ENCODE measurements at regions of chr4 and their contacts with region 1.

Region 1: DNA sequence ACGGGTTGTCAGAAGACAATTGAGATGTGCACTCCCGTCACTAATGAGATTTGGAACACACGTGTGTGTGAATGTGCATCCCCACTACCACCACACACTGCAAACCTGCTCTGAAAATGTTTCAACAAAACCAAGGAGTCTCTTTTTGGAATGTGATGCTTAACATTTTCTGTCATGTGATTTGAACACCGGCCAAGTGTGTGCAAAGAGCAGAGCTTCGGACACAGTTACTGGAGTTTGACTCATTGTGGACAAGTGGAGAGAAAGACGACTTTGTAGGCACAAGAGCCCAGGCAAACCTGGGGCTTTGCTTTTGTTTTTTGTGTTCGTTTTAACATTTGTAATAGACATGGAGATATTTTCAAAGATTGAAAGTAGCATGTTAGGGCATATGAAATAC is 49.2 kb downstream of the CCKAR start:
- DNase-seq: no peak
- H3K4me3 ChIP-seq: no peak overlapping the region
- CTCF ChIP-seq: no peak

Region 2: DNA sequence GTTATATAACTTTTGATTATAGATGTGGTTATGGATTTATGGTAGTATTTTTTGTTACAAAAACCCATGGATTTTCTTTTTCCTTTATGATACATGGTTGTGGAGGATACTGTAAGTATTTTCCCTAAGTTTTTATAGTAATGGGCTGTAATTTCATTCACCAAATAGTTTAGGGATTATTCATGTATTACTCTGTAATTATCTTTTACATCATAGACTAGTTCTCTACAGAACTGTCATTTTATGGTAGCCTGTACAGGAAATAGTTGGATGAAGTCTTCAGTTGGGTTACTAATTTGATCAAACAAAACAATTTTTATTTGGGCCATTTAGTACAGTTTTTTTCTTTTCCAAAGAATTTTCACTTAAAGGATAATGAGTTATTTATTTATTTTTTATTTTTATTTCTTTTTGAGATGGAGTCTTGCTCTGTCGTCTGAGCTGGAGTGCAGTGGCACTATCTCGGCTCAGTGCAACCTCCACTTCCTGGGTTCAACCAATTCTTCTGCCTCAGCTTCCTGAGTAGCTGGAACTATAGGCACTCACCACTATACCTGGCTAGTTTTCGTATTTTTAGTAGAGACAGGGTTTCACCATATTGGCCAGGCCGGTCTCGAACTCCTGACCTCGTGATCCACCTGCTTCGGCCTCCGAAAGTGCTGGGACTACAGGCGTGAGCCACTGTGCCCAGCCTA is 78.2 kb before region 1 on chr4:
- in situ Hi-C with region 1: no loop called
- DNase-seq: no peak
- H3K4me3 ChIP-seq: no peak overlapping the region
- CTCF ChIP-seq: no peak

Region 3: GRCh38 chr4:26509681-26510333 is 68.7 kb after region 1 on chr4:
- in situ Hi-C with region 1: no loop called
- DNase-seq: no peak
- H3K4me3 ChIP-seq: no peak overlapping the region
- CTCF ChIP-seq: no peak

Region 4: DNA sequence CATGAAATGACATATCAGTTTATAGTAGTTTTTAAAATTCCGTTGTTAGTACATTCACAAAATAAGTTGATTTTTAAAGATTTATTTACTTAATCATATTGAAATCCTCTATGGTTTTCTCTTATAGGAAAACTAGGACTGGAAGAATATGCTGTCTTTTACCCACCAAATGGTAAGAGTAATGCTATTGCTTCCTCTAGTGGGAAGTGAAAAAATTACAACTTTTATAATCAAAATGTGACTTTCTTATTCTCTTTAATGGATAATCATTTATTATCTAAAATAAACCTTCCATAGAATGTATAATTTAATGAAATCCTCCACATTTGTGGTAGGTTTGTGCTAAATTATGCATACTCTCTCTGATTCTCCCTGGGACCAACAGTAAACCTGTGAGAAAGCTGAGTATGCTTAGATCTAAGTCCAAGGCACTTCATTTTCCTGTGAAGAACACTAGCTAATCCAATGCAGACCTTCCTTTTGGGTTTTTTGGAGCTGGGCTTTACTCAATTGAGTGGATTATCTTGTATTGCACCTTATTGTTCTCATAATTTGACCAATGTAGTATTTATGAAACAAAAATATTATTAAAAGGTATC is 279.0 kb after region 1 on chr4:
- in situ Hi-C with region 1: loop called (anchors 25 kb)
- DNase-seq: no peak
- H3K4me3 ChIP-seq: no peak overlapping the region
- CTCF ChIP-seq: peak; percentile 35